CD8-positive, alpha-beta T cell (primary cell): ENCODE measurements at regions of chr11 and their contacts with region 1.

Region 1: DNA sequence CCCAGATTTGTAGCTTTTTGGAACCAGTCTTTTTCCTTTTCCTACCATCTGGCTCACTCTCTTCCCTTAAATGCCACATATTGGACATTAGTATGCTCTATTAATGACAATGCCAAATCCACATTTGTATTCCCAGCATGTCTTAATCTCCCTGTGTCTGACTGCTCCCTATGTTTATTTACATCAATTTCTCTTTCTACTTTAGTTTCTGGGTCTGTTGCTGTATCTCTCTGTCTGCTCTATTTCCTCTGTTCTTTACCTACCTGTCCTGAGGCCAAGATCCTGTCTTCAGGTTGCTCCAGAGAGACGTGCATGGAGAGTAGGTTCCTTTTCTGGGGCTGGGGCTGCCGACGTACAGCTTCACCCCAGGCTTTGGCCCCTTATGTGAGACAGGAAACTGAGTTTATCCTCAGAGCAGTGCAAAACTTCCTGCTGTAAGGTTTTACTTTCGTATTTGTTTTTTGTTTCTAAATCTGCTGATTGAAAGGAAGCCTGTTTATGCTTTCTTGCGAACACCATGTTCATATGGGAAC is 25.6 kb downstream of the OR2AG2 start:
- DNase-seq: peak in 8 of 9 experiments; percentile 26 to 82 (median 55)
- ATAC-seq: peak; percentile 84
- H3K4me3 ChIP-seq: peak overlapping the region; percentile 61 to 65
- H3K4me3 Mint-ChIP-seq: no peak overlapping the region
- H3K27ac ChIP-seq: peak overlapping the region; percentile 69 to 89
- H3K27ac Mint-ChIP-seq: no peak overlapping the region
- H3K4me1 ChIP-seq: peaks cover 57% of the 10 kb centered on the region
- H3K4me1 Mint-ChIP-seq: peaks cover 46% of the 10 kb centered on the region
- H3K27me3 ChIP-seq: no peaks in the 10 kb centered on the region
- H3K27me3 Mint-ChIP-seq: no peaks in the 10 kb centered on the region
- CTCF ChIP-seq: no peak

Region 2: GRCh38 chr11:6473481-6474422 is 272.4 kb before region 1 on chr11 and contains the start of gene TRIM3:
- CTCF ChIA-PET with region 1: no interaction called
- POLR2A ChIA-PET with region 1: no interaction called
- intact Hi-C with region 1: loop called in 1 of 2 experiments (anchors 5 kb)
- DNase-seq: peak; percentile 37 to 86 (median 74)
- ATAC-seq: peak; percentile 82
- H3K4me3 ChIP-seq: peak within 1 kb of the TSS; percentile 72 to 74
- H3K4me3 Mint-ChIP-seq: peak within 1 kb of the TSS; percentile 88
- H3K27ac ChIP-seq: peak within 1 kb of the TSS; percentile 37 to 78
- H3K27ac Mint-ChIP-seq: peak within 1 kb of the TSS; percentile 86
- H3K4me1 ChIP-seq: peaks cover 13% of the 10 kb centered on the region
- H3K4me1 Mint-ChIP-seq: peaks cover 22% of the 10 kb centered on the region
- H3K27me3 ChIP-seq: no peaks in the 10 kb centered on the region
- H3K27me3 Mint-ChIP-seq: no peaks in the 10 kb centered on the region
- CTCF ChIP-seq: no peak
- total RNA-seq, gene TRIM3: 14.5 to 18.3 TPM

Region 3: GRCh38 chr11:6727971-6728760 is 18.0 kb before region 1 on chr11:
- CTCF ChIA-PET with region 1: interaction called, 89 read pairs
- POLR2A ChIA-PET with region 1: interaction called, 5 read pairs
- intact Hi-C with region 1: loop called in 1 of 2 experiments (anchors 2 kb)
- DNase-seq: no peak
- ATAC-seq: no peak
- H3K4me3 ChIP-seq: no peak overlapping the region
- H3K4me3 Mint-ChIP-seq: peak overlapping the region; percentile 22
- H3K27ac ChIP-seq: peak overlapping the region in 1 of 2 experiments; percentile 26
- H3K27ac Mint-ChIP-seq: peak overlapping the region; percentile 91
- H3K4me1 ChIP-seq: peaks cover 49% of the 10 kb centered on the region
- H3K4me1 Mint-ChIP-seq: peaks cover 76% of the 10 kb centered on the region
- H3K27me3 ChIP-seq: no peaks in the 10 kb centered on the region
- H3K27me3 Mint-ChIP-seq: no peaks in the 10 kb centered on the region
- CTCF ChIP-seq: no peak

Region 4: GRCh38 chr11:8688414-8689362 is 1942.5 kb after region 1 on chr11:
- CTCF ChIA-PET with region 1: no interaction called
- POLR2A ChIA-PET with region 1: no interaction called
- intact Hi-C with region 1: loop called (anchors 10 kb)
- DNase-seq: peak; percentile 51 to 90 (median 80)
- ATAC-seq: peak; percentile 78
- H3K4me3 ChIP-seq: peak overlapping the region; percentile 78 to 79
- H3K4me3 Mint-ChIP-seq: peak overlapping the region; percentile 93
- H3K27ac ChIP-seq: peak overlapping the region; percentile 71 to 83
- H3K27ac Mint-ChIP-seq: peak overlapping the region; percentile 93
- H3K4me1 ChIP-seq: peaks cover 29% of the 10 kb centered on the region
- H3K4me1 Mint-ChIP-seq: peaks cover 41% of the 10 kb centered on the region
- H3K27me3 ChIP-seq: no peaks in the 10 kb centered on the region
- H3K27me3 Mint-ChIP-seq: no peaks in the 10 kb centered on the region
- CTCF ChIP-seq: no peak